ENCODE measurements at regions of chr5 and their contacts with region 1.

Region 1: GRCh38 chr5:177351385-177352329 is at the start of gene LMAN2:
- DNase-seq: peak; percentile 90
- H3K4me3 Mint-ChIP-seq: peak within 1 kb of the TSS; percentile 98
- H3K27ac Mint-ChIP-seq: peak within 1 kb of the TSS; percentile 100
- H3K4me1 Mint-ChIP-seq: peaks cover 47% of the 10 kb centered on the region
- H3K27me3 Mint-ChIP-seq: no peaks in the 10 kb centered on the region
- total RNA-seq, gene LMAN2: 108 and 118 TPM in 2 replicates

Region 2: GRCh38 chr5:176817841-176818377 is 533.7 kb before region 1 on chr5:
- intact Hi-C with region 1: no loop called
- DNase-seq: no peak
- H3K4me3 Mint-ChIP-seq: no peak overlapping the region
- H3K27ac Mint-ChIP-seq: no peak overlapping the region
- H3K4me1 Mint-ChIP-seq: peaks cover 7% of the 10 kb centered on the region
- H3K27me3 Mint-ChIP-seq: peaks cover 43% of the 10 kb centered on the region

Region 3: GRCh38 chr5:177311723-177312648 is 39.7 kb before region 1 on chr5 and contains the start of gene MXD3:
- intact Hi-C with region 1: loop called (anchors 1 kb)
- DNase-seq: peak; percentile 96
- H3K4me3 Mint-ChIP-seq: peak within 1 kb of the TSS; percentile 89
- H3K27ac Mint-ChIP-seq: peak within 1 kb of the TSS; percentile 85
- H3K4me1 Mint-ChIP-seq: peaks cover 44% of the 10 kb centered on the region
- H3K27me3 Mint-ChIP-seq: no peaks in the 10 kb centered on the region
- total RNA-seq, gene MXD3: 9.6 and 11.8 TPM in 2 replicates

Region 4: DNA sequence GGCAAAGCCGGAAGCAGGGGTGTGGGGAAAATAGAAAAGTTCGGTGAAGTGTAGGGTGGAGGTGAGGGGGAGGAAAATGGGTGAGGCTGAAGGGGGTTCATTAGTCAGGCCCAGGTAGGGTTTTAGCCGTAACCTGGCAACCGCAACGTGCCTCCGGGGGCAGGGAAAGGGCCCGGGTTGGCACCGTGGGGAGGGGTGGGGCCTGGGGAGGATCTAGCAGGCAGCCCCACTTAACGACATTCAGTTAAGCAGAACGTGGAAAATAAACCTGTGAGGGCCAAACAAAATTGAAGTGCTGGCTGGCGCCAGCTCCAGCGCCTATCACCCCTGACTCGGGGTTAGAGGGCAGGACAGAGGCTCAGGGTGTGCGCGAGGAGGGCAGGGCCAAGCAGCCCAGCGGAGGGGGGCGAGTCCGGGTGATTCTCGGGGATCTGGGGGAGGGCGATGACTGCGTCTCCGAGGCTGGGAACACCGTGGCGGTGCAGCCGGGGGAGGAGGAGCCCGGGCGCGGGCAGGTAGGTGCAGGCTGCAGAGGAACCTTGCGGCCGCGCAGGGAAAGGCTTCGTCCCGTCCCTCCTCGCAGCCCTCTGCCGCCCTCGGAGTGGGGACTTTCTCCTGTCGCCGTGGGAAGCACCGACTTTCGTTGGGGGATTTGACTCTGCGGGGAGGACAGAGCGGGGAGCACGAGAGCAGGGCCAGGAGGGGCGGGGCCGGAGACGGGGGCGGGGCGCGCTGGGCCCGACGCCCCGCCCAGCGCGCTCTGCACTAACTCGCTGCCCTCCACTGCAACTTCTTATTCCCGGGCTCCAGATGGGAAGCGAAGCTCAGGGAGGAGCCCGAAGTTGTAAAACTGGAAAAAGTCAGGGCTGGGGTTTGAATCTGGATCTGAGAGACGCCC is 11.2 kb after region 1 on chr5:
- intact Hi-C with region 1: loop called (anchors 1 kb)
- DNase-seq: peak; percentile 56
- H3K4me3 Mint-ChIP-seq: peak overlapping the region; percentile 67
- H3K27ac Mint-ChIP-seq: peak overlapping the region; percentile 56
- H3K4me1 Mint-ChIP-seq: peaks cover 65% of the 10 kb centered on the region
- H3K27me3 Mint-ChIP-seq: peaks cover 2% of the 10 kb centered on the region

Region 5: GRCh38 chr5:177368869-177369644 is 17.4 kb after region 1 on chr5:
- intact Hi-C with region 1: loop called (anchors 1 kb)
- DNase-seq: no peak
- H3K4me3 Mint-ChIP-seq: no peak overlapping the region
- H3K27ac Mint-ChIP-seq: peak overlapping the region; percentile 55
- H3K4me1 Mint-ChIP-seq: peaks cover 62% of the 10 kb centered on the region
- H3K27me3 Mint-ChIP-seq: peaks cover 2% of the 10 kb centered on the region

Region 6: DNA sequence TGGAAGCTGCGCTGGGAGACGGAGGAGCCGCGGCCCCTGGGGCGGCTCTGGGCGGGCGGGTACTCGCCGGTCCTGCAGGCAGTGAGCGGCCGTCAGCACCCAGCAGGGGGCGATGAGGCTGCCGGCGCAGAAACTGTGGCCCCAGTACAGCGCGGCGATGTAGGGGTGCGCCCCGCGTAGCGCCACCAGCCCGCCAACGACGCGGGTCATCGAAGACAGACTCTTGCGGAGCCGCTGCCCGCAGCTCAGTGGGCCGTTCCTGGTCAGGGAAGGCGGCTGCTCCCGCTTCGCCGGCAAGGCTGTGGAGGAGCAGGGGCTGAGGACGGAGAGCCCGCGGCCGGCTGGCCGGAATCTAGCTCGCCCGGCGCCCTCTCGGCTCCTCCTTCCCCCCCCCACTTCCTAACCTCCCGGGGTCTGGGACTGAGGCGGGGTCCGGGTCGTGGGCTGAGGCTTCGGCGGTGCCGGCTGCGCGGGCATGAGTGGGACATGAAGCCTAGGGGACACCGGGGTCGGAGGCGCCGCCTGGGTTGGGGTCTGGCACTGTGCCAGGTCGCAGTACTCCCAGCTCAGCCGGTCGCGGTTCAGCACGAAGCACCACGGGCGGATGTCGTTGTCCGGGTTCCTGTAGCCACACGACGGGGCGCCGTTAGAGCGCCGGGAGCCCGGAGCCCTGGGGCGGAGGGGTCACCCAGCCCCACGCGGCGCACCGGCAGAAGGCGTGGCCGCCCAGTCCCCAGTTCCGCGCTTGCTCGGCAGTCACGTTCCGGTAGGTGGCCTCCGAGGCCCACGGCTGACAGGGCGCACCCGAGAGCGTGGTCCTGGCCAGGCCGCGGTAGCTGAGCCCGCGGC is 52.4 kb after region 1 on chr5:
- intact Hi-C with region 1: loop called (anchors 2 kb)
- DNase-seq: peak; percentile 75
- H3K4me3 Mint-ChIP-seq: peak overlapping the region; percentile 84
- H3K27ac Mint-ChIP-seq: no peak overlapping the region
- H3K4me1 Mint-ChIP-seq: peaks cover 17% of the 10 kb centered on the region
- H3K27me3 Mint-ChIP-seq: peaks cover 34% of the 10 kb centered on the region